Ovary (tissue), 10 donors: ENCODE measurements at regions of chr16 and their contacts with region 1.

Region 1: GRCh38 chr16:66147291-66147690 is 219.2 kb upstream of the CDH5 start:
- DNase-seq: no peak
- H3K4me3 ChIP-seq: no peak overlapping the region
- H3K27ac ChIP-seq: no peak overlapping the region
- H3K4me1 ChIP-seq: peaks cover 8% of the 10 kb centered on the region
- H3K27me3 ChIP-seq: no peaks in the 10 kb centered on the region
- CTCF ChIP-seq: no peak
- EP300 ChIP-seq: no peak
- POLR2A ChIP-seq: no peak

Region 2: DNA sequence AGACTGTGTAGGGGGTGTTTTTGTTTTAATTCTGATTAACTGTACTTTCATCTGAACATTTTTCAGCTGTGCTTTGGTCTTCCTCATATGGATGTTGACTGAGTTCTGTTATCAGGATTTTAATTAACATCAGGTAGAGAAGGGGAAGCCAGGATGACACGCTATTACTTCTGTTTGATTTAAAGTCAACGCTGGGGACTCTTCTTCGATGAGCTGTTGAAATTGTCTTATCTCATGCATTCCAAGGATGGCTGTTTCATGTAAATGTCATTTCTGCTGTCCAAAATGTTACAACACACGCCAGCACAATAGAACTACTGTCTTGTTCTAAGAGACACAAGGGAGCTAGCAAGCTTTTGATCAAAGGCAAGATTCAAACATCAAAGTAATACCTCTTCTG is 44.1 kb before region 1 on chr16:
- intact Hi-C with region 1: loop called in 1 of 4 experiments (anchors 1 kb)
- DNase-seq: no peak
- H3K4me3 ChIP-seq: no peak overlapping the region
- H3K27ac ChIP-seq: no peak overlapping the region
- H3K4me1 ChIP-seq: peaks cover 2% of the 10 kb centered on the region
- H3K27me3 ChIP-seq: no peaks in the 10 kb centered on the region
- CTCF ChIP-seq: no peak
- EP300 ChIP-seq: no peak
- POLR2A ChIP-seq: no peak